Activated naive CD4-positive, alpha-beta T cell treated with anti-CD3 and anti-CD28 coated beads for 36 hours (primary cell): ENCODE measurements at regions of chr16 and their contacts with region 1.

Region 1: DNA sequence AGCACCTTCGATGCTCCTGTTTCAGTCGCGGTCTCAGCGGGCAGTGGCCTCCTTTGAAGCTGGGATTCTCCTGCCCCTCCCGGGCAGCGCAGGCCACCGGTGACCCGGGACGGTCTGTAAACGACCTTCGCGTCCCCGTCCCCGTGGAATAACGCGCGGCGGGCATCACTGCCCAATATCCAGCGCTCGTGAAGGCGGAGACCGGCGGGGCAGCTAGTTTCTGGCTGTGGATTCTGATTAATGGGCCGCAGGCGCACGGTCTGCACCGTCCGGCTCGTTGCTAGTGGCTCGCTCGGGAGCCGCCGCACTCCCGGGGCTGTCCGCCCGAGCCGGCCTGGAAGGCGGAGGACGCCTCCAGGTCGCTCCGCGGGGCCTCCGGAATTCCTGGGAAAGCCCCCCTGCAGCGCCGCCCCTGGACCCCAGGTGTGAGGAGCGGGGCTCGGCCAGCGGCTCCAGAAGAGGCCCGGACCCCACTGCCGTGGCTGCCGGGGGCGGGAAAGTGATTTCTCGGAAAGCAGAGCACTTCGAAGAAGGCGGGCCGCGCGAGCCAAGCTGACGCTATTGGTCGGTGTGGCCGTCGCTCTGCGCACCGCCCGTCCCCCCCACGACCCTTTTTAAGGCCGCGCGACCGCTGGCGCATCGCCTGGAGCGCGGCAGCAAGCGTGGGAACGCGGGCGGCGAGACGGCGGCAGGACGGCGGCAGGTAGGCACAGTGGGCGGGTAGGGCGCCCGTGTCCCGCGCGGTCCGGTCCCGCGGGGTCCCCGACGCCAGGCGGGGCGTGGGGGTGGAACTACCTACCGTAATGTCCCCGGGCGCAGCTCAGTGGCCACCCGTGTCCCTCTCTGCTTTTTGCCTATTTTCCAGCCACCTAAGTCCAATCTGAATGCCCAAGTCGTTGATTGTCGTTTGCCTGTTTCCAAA is at the start of gene IRF8:
- DNase-seq: peak; percentile 88
- H3K4me3 Mint-ChIP-seq: peak within 1 kb of the TSS; percentile 87
- H3K27ac Mint-ChIP-seq: peak within 1 kb of the TSS; percentile 93
- H3K4me1 Mint-ChIP-seq: peaks cover 39% of the 10 kb centered on the region
- H3K27me3 Mint-ChIP-seq: no peaks in the 10 kb centered on the region
- total RNA-seq, gene IRF8: 323 to 328 TPM

Region 2: DNA sequence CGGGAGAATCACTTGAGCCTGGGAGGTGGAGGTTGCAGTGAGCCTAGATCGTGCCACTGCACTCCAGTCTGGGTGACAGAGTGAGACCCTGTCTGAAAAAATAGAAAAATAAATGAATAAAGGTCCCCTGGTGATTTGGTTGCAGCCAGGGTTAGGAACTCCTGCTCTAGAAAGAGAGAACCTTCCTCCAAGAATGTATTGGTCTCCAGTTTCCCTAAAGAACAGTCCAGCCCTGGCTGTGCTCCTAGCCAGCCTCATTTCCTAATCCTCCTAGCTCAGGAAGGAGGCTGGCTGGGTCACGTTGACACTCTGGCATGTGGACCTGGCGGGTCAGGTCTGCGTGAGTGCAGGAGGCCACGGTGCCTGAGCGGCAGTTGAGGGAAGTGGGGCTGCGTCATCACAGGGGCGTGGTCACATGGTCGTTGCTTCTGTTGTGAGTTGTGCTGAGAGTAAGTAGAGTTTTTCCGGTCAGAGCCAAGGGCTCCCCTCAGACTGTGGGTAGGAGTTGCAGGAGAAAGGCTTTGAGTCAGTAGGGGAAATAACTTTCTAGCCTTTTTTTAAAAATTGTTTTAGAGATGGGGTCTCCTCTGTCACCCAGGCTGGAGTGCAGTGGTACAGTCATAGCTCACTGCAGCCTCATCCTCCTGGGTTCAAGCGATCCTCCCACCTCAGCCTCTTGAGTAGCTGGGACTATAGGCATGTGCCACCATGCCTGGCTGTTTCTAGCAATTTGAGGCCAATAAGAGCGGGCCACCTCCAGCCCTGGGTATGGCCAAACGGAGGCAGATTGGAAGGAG is 592.6 kb before region 1 on chr16:
- CTCF ChIA-PET with region 1: no interaction called
- intact Hi-C with region 1: loop called (anchors 5 kb)
- DNase-seq: peak; percentile 98
- H3K4me3 Mint-ChIP-seq: peak overlapping the region; percentile 42
- H3K27ac Mint-ChIP-seq: peak overlapping the region; percentile 78
- H3K4me1 Mint-ChIP-seq: peaks cover 66% of the 10 kb centered on the region
- H3K27me3 Mint-ChIP-seq: no peaks in the 10 kb centered on the region

Region 3: DNA sequence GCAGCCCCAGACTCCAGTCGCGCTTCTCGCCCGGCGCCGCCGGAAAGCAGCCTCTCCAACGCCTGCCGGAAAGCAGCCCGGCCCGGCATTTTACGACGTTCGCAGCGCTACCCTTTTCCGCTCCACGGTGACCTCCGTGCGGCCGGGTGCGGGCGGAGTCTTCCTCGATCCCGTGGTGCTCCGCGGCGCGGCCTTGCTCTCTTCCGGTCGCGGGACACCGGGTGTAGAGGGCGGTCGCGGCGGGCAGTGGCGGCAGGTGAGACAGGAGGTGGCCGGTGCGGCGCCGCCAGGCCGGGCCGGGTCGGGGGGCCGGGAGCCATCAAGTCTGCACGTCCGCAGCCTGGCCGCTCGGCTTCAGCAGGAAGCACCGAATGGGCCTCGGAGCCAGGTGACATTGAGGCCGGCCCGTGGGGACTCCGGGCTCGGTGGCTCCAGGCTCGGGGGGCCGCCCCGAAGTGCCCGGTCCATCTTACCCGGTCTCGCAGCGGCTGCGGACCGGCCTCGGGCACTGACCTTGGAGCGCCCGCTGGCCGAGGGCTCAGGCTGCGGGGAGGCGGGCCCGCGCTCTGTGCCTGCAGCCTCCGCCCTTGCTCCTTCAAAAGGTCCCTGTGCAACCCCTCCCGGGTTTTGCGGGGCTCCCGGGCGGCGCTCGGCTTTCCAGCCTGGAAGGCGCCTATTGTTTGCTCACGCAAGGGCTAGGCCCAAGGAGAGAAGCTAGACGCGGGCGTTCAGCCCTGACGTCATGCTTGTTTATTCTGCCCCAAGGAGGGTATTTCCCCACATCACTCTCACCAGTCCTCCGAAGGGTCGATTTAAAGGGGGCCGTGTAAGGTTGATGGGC is 99.1 kb before region 1 on chr16 and contains the starts of genes COX4I1 and EMC8:
- CTCF ChIA-PET with region 1: interaction called, 3 read pairs
- intact Hi-C with region 1: loop called (anchors 1 kb)
- DNase-seq: peak; percentile 97
- H3K4me3 Mint-ChIP-seq: peak within 1 kb of the TSS; percentile 86
- H3K27ac Mint-ChIP-seq: peak within 1 kb of the TSS; percentile 88
- H3K4me1 Mint-ChIP-seq: peaks cover 56% of the 10 kb centered on the region
- H3K27me3 Mint-ChIP-seq: no peaks in the 10 kb centered on the region
- total RNA-seq, gene COX4I1: 563 to 568 TPM
- total RNA-seq, gene EMC8: 28.5 to 31.6 TPM

Region 4: DNA sequence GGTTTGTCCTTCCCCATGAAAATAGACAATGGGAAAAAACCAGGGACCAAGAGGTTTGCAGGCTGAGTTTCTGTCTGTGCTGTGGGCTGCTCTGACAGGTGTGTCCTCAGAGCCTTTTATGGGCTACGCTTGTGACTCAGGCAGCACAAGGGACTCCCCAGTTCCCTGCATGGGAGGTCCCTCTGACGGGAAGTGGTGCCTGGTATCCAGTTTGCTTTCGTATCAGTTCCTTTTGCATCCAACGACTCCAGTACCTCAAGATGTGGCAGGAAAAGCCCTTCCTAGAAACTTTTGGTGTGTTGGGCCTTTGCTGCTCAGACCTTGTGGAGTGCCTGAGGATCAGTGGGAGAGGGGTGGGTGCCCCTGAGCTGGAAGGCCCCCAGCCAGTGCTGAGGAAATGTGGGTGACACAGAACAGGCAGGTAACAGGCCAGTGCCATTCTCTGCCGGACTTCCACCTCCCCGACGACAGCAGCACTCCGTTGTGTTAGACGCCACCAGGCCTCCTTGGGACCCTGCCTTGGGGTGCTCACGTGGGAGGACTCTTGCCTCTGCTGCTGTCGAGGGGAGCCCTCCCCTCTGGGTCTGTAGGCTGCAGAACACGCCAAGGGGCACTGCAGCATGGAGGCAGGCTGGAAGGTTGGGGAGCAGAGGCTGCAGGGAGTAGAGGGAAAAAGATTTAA is 38.2 kb before region 1 on chr16:
- CTCF ChIA-PET with region 1: no interaction called
- intact Hi-C with region 1: loop called (anchors 5 kb)
- DNase-seq: peak; percentile 61
- H3K4me3 Mint-ChIP-seq: no peak overlapping the region
- H3K27ac Mint-ChIP-seq: no peak overlapping the region
- H3K4me1 Mint-ChIP-seq: peaks cover 10% of the 10 kb centered on the region
- H3K27me3 Mint-ChIP-seq: peaks cover 2% of the 10 kb centered on the region

Region 5: DNA sequence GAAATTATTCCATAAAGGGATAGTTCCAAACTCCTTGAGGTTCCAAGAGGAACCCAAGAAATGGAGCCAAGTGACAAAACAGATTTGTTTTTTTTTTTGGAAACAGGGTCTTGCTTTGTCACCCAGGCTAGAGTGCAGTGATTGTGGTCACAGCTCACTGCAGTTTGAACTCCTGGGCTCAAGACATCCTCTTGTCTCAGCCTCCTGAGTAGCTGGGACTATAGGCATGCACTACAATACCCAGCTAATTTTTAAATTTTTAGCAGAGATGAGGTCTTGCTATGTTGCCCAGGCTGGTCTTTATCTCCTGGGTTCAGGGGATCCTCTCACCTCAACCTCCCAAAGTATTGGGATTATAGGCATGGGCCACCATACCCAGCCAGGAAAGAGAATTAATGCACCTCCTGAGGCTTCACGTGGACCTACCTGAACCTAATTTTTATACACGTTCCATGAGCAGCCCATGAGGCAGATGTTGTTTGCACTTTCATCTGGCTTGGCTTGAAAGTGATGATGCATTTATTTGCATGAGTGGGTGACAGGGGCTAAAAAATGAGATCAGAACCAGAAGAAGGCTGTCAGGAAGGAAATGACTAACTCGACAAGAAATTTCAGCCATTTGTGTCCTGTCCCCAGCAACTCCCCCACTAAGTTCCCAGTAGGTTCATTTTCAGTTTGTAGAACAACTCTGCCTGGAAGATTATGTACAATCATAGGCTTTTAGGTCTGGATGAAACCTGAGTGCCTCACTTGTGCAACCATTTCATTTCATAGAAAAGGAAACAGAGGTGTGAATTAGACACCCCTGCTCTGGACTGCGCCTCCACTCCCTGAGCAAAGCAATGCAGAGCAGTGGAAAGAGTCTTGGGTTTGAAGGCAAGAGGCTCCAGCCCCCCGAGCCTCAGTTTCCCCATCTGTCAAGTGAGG is 10.1 kb before region 1 on chr16:
- CTCF ChIA-PET with region 1: interaction called, 4 read pairs
- intact Hi-C with region 1: loop called (anchors 1 kb)
- DNase-seq: peak; percentile 73
- H3K4me3 Mint-ChIP-seq: no peak overlapping the region
- H3K27ac Mint-ChIP-seq: peak overlapping the region; percentile 85
- H3K4me1 Mint-ChIP-seq: peaks cover 44% of the 10 kb centered on the region
- H3K27me3 Mint-ChIP-seq: peaks cover 13% of the 10 kb centered on the region

Region 6: GRCh38 chr16:85947230-85948137 is 48.7 kb after region 1 on chr16:
- CTCF ChIA-PET with region 1: interaction called, 3 read pairs
- intact Hi-C with region 1: loop called (anchors 1 kb)
- DNase-seq: peak; percentile 89
- H3K4me3 Mint-ChIP-seq: peak overlapping the region; percentile 38
- H3K27ac Mint-ChIP-seq: peak overlapping the region; percentile 84
- H3K4me1 Mint-ChIP-seq: peaks cover 70% of the 10 kb centered on the region
- H3K27me3 Mint-ChIP-seq: peaks cover 3% of the 10 kb centered on the region